HCT116 (cell line): ENCODE measurements at regions of chr2 and their contacts with region 1.

Region 1: DNA sequence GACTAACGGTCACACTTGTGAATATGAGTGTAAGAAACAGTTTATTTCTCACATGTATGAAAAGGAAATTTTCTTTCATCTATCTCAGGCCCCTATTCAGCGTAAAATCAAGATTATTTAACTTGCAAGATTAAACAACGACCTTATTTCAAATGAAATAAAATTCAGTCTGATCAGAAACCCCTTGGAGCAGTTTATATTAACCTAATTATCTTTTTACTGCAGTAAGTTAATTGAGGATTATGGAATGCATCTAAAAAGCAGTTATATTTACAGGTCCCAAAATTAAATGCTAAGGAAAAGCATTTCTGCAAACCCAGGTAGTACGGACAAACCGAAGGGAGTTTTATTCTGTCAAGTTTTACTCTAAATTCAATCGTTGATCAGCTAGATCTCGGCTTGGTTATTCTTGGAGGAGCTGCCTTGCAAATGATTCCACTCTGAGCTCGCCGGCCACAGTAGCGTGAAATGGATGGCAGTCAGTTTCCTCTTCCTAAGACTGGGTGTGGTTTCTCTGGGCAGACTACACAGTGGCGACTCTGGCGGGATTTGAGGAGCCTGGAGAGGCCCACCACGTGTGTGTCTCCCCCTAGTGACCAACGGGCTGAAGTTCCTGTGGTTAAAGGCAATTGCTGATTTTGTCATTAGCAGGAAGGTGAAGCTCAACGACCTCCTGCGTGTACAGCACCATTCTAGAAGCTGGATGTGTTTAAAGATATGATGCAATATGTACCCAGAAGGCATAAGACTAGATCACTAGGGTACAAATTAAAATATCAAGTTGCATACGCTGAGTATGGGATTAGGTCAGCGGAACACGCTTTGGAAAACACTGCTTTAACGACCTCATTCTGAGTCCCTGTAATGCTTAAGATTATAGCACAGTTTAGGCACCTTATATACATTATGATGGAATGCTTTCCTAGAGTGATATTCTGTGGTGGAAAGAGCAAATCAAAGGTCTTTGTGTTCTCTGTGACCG is 36.4 kb downstream of the PRKRA start:
- DNase-seq: peak; percentile 93
- ATAC-seq: peak; percentile 83
- H3K4me3 ChIP-seq: peak overlapping the region; percentile 68 to 79
- H3K27ac ChIP-seq: peak overlapping the region; percentile 73; the same call in 1 of the 2 replicates
- H3K4me1 ChIP-seq: peaks cover 12 to 17% of the 10 kb centered on the region in 2 experiments; a peak in 3 of 4 replicates
- H3K27me3 ChIP-seq: no peaks in the 10 kb centered on the region
- CTCF ChIP-seq: peak; percentile 85 to 89 (median 89)
- POLR2A ChIP-seq: peak; percentile 65
- RAD21 ChIP-seq: peak; percentile 89

Region 2: GRCh38 chr2:177983183-177983788 is 431.3 kb before region 1 on chr2:
- CTCF ChIA-PET with region 1: interaction called, 4 read pairs
- POLR2A ChIA-PET with region 1: no interaction called
- RAD21 ChIA-PET with region 1: no interaction called
- intact Hi-C with region 1: loop called (anchors 5 kb)
- DNase-seq: peak; percentile 34
- ATAC-seq: peak; percentile 90
- H3K4me3 ChIP-seq: no peak overlapping the region
- H3K27ac ChIP-seq: no peak overlapping the region
- H3K4me1 ChIP-seq: no peaks in the 10 kb centered on the region
- H3K27me3 ChIP-seq: no peaks in the 10 kb centered on the region
- CTCF ChIP-seq: peak; percentile 58 to 94 (median 93); a peak in 5 of 6 replicates
- POLR2A ChIP-seq: no peak
- RAD21 ChIP-seq: peak; percentile 80

Region 3: GRCh38 chr2:178128836-178129630 is 285.5 kb before region 1 on chr2:
- CTCF ChIA-PET with region 1: interaction called, 6 read pairs
- POLR2A ChIA-PET with region 1: interaction called, 4 read pairs
- RAD21 ChIA-PET with region 1: no interaction called
- intact Hi-C with region 1: loop called (anchors 2 kb)
- DNase-seq: no peak
- ATAC-seq: no peak
- H3K4me3 ChIP-seq: no peak overlapping the region
- H3K27ac ChIP-seq: no peak overlapping the region
- H3K4me1 ChIP-seq: no peaks in the 10 kb centered on the region
- H3K27me3 ChIP-seq: no peaks in the 10 kb centered on the region
- CTCF ChIP-seq: no peak
- POLR2A ChIP-seq: no peak
- RAD21 ChIP-seq: no peak

Region 4: DNA sequence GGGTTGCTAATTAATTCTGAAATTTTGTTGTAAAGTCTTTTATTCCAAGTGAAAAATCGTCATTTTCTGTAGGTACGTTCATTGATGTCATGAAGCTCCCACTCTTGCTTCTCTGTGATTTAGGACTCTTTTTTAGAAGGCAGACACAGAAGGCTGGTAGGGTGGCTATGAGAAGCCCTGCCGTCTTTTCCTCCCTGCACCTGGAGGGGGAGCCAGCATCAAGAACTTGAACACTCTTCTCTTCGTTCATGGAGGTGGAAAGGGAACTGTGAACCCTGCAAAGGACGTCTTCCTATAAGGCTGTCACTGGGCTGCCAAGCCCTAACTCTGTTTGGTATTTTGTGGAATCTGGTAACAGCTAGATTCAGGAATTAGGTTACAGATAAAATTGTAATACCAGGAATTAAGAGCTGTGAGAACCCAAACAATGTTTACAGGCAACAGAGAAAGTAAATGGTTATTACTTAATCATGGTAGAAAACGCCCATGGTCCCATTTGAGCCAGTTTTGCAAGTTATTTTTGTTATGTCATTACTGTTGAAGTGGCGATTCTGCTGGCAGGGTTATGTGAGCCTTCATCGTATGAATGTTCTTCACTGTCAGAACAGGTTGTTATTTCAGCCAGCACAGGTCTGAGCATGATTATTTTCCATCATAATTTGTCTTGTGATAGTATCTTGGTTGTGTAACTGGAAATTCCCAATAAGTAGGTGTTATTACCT is 108.0 kb before region 1 on chr2:
- CTCF ChIA-PET with region 1: interaction called, 5 read pairs
- POLR2A ChIA-PET with region 1: no interaction called
- RAD21 ChIA-PET with region 1: no interaction called
- intact Hi-C with region 1: loop called (anchors 5 kb)
- DNase-seq: peak; percentile 24
- ATAC-seq: peak; percentile 95
- H3K4me3 ChIP-seq: no peak overlapping the region
- H3K27ac ChIP-seq: no peak overlapping the region
- H3K4me1 ChIP-seq: no peaks in the 10 kb centered on the region
- H3K27me3 ChIP-seq: no peaks in the 10 kb centered on the region
- CTCF ChIP-seq: peak; percentile 42 to 68 (median 65); a peak in 5 of 6 replicates
- POLR2A ChIP-seq: no peak
- RAD21 ChIP-seq: peak; percentile 61

Region 5: DNA sequence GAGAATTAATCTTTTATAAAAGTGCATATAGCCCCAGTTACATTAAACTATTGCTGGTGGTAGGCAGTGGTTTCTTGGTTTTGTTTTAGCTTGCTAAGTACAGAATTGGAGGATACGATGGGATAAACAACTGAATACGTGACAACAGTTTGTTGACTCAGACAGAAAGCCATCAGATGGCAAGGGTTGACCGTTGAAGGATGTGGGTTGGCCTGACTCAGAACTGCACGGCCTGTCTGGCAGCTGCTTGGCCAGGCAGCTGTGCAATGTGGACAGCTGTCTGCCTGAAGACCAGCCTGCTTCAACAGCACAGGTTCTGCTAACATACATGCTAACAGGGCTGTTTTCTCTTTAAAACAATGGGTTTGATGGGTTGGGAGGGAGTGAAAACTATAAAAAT is 10.2 kb before region 1 on chr2:
- CTCF ChIA-PET with region 1: interaction called, 22 read pairs
- POLR2A ChIA-PET with region 1: interaction called, 7 read pairs
- RAD21 ChIA-PET with region 1: interaction called in 1 of 2 experiments, 3 read pairs
- intact Hi-C with region 1: no loop called
- DNase-seq: no peak
- ATAC-seq: 0 out of 2 replicates have a peak, but pooled peaks have one; percentile 54
- H3K4me3 ChIP-seq: no peak overlapping the region
- H3K27ac ChIP-seq: no peak overlapping the region
- H3K4me1 ChIP-seq: no peaks in the 10 kb centered on the region
- H3K27me3 ChIP-seq: no peaks in the 10 kb centered on the region
- CTCF ChIP-seq: no peak
- POLR2A ChIP-seq: no peak
- RAD21 ChIP-seq: no peak

Region 6: DNA sequence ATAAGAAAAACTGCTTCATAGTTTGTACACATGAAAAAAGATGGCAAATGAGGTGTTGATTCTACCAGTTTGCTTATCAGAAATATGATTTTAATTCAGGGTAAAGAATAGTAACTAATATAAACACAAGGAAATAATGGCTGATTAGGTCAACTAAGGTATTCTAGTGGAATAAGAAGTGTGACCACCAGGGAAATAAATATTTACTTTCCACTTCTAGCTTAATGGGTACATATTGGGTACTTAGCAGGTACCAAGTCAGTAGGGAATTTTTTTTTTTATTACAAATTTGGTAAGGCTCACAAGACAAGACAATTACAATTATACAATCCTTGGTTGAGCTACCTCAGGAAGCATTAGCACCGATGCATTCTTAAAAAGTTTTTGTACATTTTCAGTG is 201.4 kb after region 1 on chr2:
- CTCF ChIA-PET with region 1: no interaction called
- POLR2A ChIA-PET with region 1: no interaction called
- RAD21 ChIA-PET with region 1: no interaction called
- intact Hi-C with region 1: no loop called
- DNase-seq: no peak
- ATAC-seq: no peak
- H3K4me3 ChIP-seq: no peak overlapping the region
- H3K27ac ChIP-seq: no peak overlapping the region
- H3K4me1 ChIP-seq: no peaks in the 10 kb centered on the region
- H3K27me3 ChIP-seq: peaks cover 9% of the 10 kb centered on the region
- CTCF ChIP-seq: no peak
- POLR2A ChIP-seq: no peak
- RAD21 ChIP-seq: no peak